Vagina (tissue), 2 donors: ENCODE measurements at regions of chr2 and their contacts with region 1.

Region 1: GRCh38 chr2:102235491-102235890 is 48.7 kb downstream of the IL1RL2 start:
- DNase-seq: peak in 1 of 2 donors; percentile 79
- H3K4me3 ChIP-seq: no peak overlapping the region
- H3K27ac ChIP-seq: no peak overlapping the region
- H3K4me1 ChIP-seq: no peaks in the 10 kb centered on the region
- H3K27me3 ChIP-seq: no peaks in the 10 kb centered on the region
- CTCF ChIP-seq: no peak
- POLR2A ChIP-seq: no peak

Region 2: GRCh38 chr2:100350707-100351106 is 1884.8 kb before region 1 on chr2:
- intact Hi-C with region 1: no loop called
- DNase-seq: no peak
- H3K4me3 ChIP-seq: no peak overlapping the region
- H3K27ac ChIP-seq: no peak overlapping the region
- H3K4me1 ChIP-seq: no peaks in the 10 kb centered on the region
- H3K27me3 ChIP-seq: no peaks in the 10 kb centered on the region
- CTCF ChIP-seq: no peak
- POLR2A ChIP-seq: no peak

Region 3: GRCh38 chr2:101736861-101737291 is 498.6 kb before region 1 on chr2:
- intact Hi-C with region 1: loop called (anchors 10 kb)
- DNase-seq: no peak
- H3K4me3 ChIP-seq: no peak overlapping the region
- H3K27ac ChIP-seq: no peak overlapping the region
- H3K4me1 ChIP-seq: peaks cover 64% of the 10 kb centered on the region
- H3K27me3 ChIP-seq: no peaks in the 10 kb centered on the region
- CTCF ChIP-seq: no peak
- POLR2A ChIP-seq: no peak

Region 4: GRCh38 chr2:102013206-102014040 is 222.1 kb before region 1 on chr2:
- intact Hi-C with region 1: loop called (anchors 2 kb)
- DNase-seq: no peak
- H3K4me3 ChIP-seq: no peak overlapping the region
- H3K27ac ChIP-seq: no peak overlapping the region
- H3K4me1 ChIP-seq: no peaks in the 10 kb centered on the region
- H3K27me3 ChIP-seq: no peaks in the 10 kb centered on the region
- CTCF ChIP-seq: no peak
- POLR2A ChIP-seq: no peak

Region 5: GRCh38 chr2:102187496-102188150 is 47.9 kb before region 1 on chr2:
- intact Hi-C with region 1: no loop called
- DNase-seq: no peak
- H3K4me3 ChIP-seq: peak overlapping the region; percentile 53 to 55
- H3K27ac ChIP-seq: peak overlapping the region; percentile 75
- H3K4me1 ChIP-seq: peaks cover 10% of the 10 kb centered on the region
- H3K27me3 ChIP-seq: no peaks in the 10 kb centered on the region
- CTCF ChIP-seq: peak in 1 of 3 experiments; percentile 28
- POLR2A ChIP-seq: peak in 1 of 2 donors; percentile 24